HAP-1 (cell line): ENCODE measurements at regions of chr2 and their contacts with region 1.

Region 1: DNA sequence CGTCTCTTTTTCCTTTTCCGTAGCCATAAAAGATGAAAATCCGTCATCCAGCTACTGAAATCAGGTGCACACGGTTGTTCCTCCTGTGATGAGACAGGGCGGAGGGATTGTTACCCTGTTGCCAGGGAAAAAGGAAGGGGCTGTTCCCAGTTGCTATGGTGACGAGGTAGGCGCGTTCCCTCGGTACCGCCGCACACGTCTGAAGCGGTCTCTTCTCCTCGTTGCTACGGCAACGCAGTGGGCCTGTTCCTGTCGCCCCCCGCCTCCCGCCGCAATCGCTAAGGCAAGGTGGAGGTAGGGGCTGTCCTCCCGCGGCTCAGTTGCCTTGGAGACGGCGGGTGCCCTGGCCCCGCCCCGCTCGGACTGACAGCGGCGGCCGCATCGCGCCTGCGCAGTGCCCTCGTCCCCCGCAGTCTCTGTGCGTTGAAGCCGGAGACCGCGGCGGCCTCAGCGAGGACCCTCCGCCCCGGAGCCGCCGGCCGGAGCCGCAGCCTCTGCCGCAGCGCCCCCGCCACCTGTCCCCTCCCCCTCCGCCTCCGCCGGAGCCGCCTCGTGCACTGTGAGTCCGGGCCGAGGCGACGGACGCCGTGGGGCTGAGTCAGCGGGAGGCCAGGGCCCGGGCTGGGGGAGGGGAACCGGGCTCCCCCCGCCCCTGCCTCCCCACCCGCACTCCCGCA is at the start of gene MAPRE3:
- DNase-seq: peak; percentile 84 to 91
- H3K4me3 ChIP-seq: peak within 1 kb of the TSS; percentile 47
- H3K4me1 ChIP-seq: peaks cover 6% of the 10 kb centered on the region
- H3K27me3 ChIP-seq: peaks cover 26% of the 10 kb centered on the region

Region 2: GRCh38 chr2:27191053-27191829 is 220.9 kb after region 1 on chr2:
- in situ Hi-C with region 1: loop called (anchors 25 kb)
- DNase-seq: peak in 1 of 2 experiments; percentile 57
- H3K4me3 ChIP-seq: no peak overlapping the region
- H3K4me1 ChIP-seq: no peaks in the 10 kb centered on the region
- H3K27me3 ChIP-seq: no peaks in the 10 kb centered on the region

Region 3: GRCh38 chr2:27281855-27282559 is 311.6 kb after region 1 on chr2 and contains the start of gene TRIM54:
- in situ Hi-C with region 1: loop called (anchors 10 kb)
- DNase-seq: peak; percentile 84 to 94
- H3K4me3 ChIP-seq: peak within 1 kb of the TSS; percentile 20
- H3K4me1 ChIP-seq: peaks cover 58% of the 10 kb centered on the region
- H3K27me3 ChIP-seq: no peaks in the 10 kb centered on the region

Region 4: DNA sequence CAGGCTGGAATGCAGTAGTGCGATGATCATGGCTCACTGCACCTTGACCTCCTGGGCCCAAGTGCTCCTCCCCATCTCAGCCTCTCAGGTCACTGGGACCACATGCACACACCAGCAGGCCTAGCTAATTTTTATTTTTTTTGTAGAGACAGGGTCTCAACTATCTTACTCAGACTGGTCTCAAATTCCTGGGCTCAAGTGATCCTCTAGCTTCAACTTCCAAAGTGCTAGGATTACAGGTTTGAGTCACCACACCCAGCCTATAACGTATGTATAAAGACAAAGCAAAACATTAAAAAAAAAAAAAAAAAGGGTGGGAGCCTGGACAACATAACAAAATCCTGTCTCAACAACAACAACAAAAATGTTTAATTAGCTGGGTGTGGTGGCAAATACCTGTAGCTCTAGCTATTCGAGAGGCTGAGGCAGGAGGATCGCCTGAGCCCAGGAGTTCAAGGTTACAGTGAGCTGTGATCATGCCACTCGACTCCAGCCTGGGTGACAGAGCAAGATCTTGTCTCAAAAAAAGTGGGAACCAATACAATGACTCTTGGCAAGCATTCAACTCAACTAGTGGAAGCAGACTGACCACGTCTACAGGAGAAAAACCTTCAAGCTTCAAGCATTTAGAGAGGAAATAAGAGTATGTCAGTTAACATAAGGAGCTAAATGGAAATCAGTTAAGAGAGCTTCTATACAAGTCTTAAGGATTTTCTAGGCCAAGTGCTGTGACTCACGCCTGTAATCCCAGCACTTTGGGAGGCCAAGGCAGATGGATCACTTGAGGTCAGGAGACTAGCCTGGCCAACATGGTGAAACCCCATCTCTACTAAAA is 383.6 kb after region 1 on chr2:
- in situ Hi-C with region 1: no loop called
- DNase-seq: no peak
- H3K4me3 ChIP-seq: no peak overlapping the region
- H3K4me1 ChIP-seq: peaks cover 17% of the 10 kb centered on the region
- H3K27me3 ChIP-seq: no peaks in the 10 kb centered on the region